ENCODE measurements at regions of chr6 and their contacts with region 1.

Region 1: DNA sequence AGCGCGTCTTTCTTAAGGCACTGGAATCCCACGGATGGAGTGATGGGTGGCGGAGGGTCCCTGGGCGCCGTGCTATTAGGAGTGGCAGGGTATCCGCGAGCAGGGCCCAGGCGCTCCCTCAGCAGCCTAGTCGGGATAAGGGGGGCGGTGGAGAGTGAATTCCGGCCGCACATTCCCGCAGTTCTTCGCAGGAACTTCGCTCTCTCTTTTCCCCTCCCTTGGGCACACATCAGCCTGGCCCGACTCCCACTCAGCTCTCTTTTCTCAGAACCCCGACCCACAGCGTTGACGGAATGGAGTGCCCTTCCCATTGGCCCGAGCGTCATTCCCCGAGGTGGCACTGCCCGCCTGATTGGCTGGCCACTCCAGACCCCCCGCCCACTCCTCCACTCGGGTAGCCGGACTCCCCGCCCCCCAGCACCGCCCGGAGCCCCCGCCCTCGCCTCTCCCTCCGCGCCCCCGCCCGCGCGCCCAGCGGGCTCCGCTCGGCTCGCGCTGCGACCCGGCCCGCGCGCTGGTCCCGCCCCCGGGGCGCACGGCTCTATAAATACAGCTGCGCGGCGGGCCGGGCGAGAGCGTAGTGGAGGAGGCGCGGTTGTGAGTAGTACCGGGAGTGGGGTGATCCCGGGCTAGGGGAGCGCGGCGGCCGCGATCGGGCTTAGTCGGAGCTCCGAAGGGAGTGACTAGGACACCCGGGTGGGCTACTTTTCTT is at the start of gene ID4:
- DNase-seq: peak; percentile 96
- ATAC-seq: peak; percentile 90
- H3K4me3 ChIP-seq: peak within 1 kb of the TSS; percentile 78
- H3K27ac ChIP-seq: peak within 1 kb of the TSS; percentile 89
- H3K4me1 ChIP-seq: no peaks in the 10 kb centered on the region
- H3K27me3 ChIP-seq: no peaks in the 10 kb centered on the region
- CTCF ChIP-seq: no peak
- POLR2A ChIP-seq: peak; percentile 99
- RAD21 ChIP-seq: no peak
- total RNA-seq, gene ID4: 3.0 and 11.1 TPM in 2 replicates

Region 2: DNA sequence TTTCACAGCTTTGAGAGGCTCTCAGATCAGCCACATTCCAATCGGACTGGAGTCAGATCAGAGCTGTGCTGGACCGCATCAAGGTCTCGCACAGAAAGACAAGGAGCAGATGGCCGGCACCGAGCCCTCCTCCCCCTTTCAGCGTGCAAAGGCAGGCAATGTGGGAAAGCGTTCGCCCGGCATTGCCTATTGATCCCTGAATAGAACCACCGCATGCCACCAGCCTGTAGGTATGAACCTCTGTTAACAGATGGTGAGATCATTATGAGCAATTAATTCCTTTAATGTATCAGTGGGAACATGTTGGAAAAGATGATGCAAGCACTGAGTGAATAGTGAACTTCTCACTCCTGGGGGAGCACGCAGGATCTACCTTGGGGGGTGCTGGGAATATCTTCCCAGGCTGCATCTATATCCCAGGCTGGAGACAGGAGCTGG is 117.2 kb before region 1 on chr6:
- CTCF ChIA-PET with region 1: no interaction called
- POLR2A ChIA-PET with region 1: no interaction called
- dilution Hi-C with region 1: no loop called
- in situ Hi-C with region 1: no loop called
- intact Hi-C with region 1: loop called (anchors 5 kb)
- DNase-seq: peak; percentile 70
- ATAC-seq: peak; percentile 79
- H3K4me3 ChIP-seq: no peak overlapping the region
- H3K27ac ChIP-seq: no peak overlapping the region
- H3K4me1 ChIP-seq: peaks cover 3% of the 10 kb centered on the region
- H3K27me3 ChIP-seq: no peaks in the 10 kb centered on the region
- CTCF ChIP-seq: no peak
- POLR2A ChIP-seq: no peak
- RAD21 ChIP-seq: no peak

Region 3: GRCh38 chr6:19771753-19772336 is 65.1 kb before region 1 on chr6:
- CTCF ChIA-PET with region 1: no interaction called
- POLR2A ChIA-PET with region 1: interaction called, 24 read pairs
- dilution Hi-C with region 1: no loop called
- in situ Hi-C with region 1: no loop called
- intact Hi-C with region 1: no loop called
- DNase-seq: peak; percentile 64
- ATAC-seq: peak; percentile 54
- H3K4me3 ChIP-seq: no peak overlapping the region
- H3K27ac ChIP-seq: no peak overlapping the region
- H3K4me1 ChIP-seq: no peaks in the 10 kb centered on the region
- H3K27me3 ChIP-seq: no peaks in the 10 kb centered on the region
- CTCF ChIP-seq: no peak
- POLR2A ChIP-seq: no peak
- RAD21 ChIP-seq: no peak

Region 4: DNA sequence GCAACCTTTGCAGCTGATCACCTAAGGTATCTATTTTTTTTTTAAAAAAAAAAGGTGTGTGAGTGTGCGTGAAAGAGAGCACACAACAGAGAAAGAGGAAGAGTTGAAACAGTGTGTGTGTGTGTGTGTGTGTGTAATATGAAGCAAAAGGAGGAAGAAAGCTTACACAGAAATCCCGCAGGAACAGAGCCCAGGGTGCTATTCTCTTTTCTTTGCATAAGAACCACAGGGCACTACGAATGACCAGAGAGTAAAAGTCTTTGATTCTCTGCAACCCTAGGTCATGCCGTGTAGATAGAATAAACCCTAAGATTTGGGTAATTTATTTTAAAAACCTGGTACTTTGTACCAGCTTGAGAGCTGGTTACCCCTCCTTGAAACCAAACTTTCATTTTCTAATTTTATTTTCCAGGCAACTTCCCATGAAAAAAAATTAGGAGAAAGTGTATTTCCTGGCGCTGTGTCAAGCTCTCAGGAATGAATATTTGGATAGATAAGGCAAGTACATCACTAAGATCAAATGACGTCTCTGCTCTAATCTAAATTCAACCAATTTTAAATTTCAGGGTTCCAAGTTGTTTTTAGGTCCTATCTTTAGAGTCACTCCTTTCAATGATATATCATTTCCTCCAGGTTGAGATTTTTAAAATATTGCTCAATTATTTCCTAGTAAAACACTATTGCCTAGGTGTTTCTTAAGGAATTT is 47.7 kb before region 1 on chr6:
- CTCF ChIA-PET with region 1: no interaction called
- POLR2A ChIA-PET with region 1: no interaction called
- dilution Hi-C with region 1: no loop called
- in situ Hi-C with region 1: no loop called
- intact Hi-C with region 1: loop called (anchors 1 kb)
- DNase-seq: peak; percentile 26
- ATAC-seq: no peak; the same call in 1 of the 2 replicates
- H3K4me3 ChIP-seq: no peak overlapping the region
- H3K27ac ChIP-seq: no peak overlapping the region
- H3K4me1 ChIP-seq: peaks cover 6% of the 10 kb centered on the region
- H3K27me3 ChIP-seq: no peaks in the 10 kb centered on the region
- CTCF ChIP-seq: no peak
- POLR2A ChIP-seq: no peak
- RAD21 ChIP-seq: no peak

Region 5: GRCh38 chr6:19804205-19805123 is 32.5 kb before region 1 on chr6:
- CTCF ChIA-PET with region 1: no interaction called
- POLR2A ChIA-PET with region 1: interaction called, 3 read pairs
- dilution Hi-C with region 1: no loop called
- in situ Hi-C with region 1: no loop called
- intact Hi-C with region 1: loop called (anchors 1 kb)
- DNase-seq: peak; percentile 96
- ATAC-seq: peak; percentile 98
- H3K4me3 ChIP-seq: peak overlapping the region; percentile 63
- H3K27ac ChIP-seq: peak overlapping the region; percentile 93
- H3K4me1 ChIP-seq: peaks cover 2% of the 10 kb centered on the region
- H3K27me3 ChIP-seq: no peaks in the 10 kb centered on the region
- CTCF ChIP-seq: 0 out of 2 replicates have a peak, but pooled peaks have one; percentile 3
- POLR2A ChIP-seq: peak; percentile 96
- RAD21 ChIP-seq: peak; percentile 19

Measured in IMR-90 (cell line).